ENCODE measurements at regions of chr6 and their contacts with region 1.

Region 1: DNA sequence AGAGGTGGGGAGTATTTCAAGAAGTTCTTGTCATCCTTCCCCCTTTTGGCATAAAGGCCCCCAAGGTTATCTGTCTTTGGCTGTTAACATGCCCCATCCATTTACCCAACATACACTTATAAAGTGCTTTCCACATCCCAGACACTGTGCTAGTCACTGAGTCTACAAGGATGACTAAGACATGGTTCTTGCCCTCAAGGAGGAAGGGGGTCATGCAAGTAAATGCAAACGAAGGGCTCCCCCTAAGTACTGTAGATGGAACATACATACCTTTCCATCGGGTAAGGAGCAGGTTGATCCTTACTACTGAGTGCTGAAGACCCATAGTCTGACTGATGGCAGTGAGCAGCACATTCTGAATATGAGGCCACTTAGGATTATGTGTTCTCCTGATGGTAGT is 38.3 kb downstream of the HECA start:
- DNase-seq: no peak
- H3K4me3 Mint-ChIP-seq: no peak overlapping the region
- H3K27ac Mint-ChIP-seq: peak overlapping the region; percentile 78
- H3K4me1 Mint-ChIP-seq: peaks cover 90% of the 10 kb centered on the region
- H3K27me3 Mint-ChIP-seq: no peaks in the 10 kb centered on the region

Region 2: DNA sequence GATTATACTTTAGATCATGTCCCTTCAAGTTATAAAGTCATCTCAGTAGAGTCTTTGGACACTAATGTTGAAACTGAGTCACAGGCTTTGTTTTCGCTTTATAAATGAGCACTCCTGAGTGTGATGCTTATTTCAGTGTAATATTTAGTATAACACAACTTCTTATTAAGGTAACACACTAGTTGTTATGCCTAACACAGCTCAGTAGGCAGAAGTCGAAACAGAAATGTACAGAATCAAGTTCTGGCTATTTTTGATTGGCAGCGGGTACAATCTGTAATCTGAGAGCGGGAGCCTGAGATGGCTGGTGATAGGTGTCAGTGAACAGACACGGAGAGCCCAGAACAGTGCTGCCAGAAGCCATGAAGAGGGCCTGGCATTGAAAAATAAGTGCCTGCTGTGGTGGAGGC is 26.9 kb before region 1 on chr6:
- CTCF ChIA-PET with region 1: interaction called, 4 read pairs
- POLR2A ChIA-PET with region 1: interaction called, 8 read pairs
- intact Hi-C with region 1: loop called (anchors 1 kb)
- DNase-seq: peak; percentile 59
- H3K4me3 Mint-ChIP-seq: peak overlapping the region; percentile 72
- H3K27ac Mint-ChIP-seq: peak overlapping the region; percentile 99
- H3K4me1 Mint-ChIP-seq: peaks cover 94% of the 10 kb centered on the region
- H3K27me3 Mint-ChIP-seq: no peaks in the 10 kb centered on the region

Region 3: DNA sequence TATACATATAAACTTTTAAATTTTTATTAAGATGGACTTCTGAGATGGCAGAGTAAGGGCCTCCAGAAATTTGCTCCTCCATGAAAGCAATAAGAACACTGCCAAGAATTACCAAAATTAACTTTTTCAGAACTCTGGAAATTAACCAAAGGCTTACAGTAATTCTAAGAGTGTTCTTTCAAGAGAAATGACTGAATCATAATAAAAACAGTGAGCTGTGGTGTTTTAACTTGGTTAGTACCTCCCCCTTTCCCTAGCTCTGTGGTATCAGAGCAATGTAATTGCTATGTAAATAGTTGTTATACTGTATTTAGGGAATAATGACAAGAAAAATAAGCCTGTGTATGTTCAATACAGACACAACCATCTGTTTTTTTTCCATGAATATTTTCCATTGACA is 19.3 kb before region 1 on chr6:
- CTCF ChIA-PET with region 1: no interaction called
- POLR2A ChIA-PET with region 1: interaction called, 3 read pairs
- intact Hi-C with region 1: loop called (anchors 2 kb)
- DNase-seq: no peak
- H3K4me3 Mint-ChIP-seq: peak overlapping the region; percentile 37
- H3K27ac Mint-ChIP-seq: peak overlapping the region; percentile 98
- H3K4me1 Mint-ChIP-seq: peaks cover 85% of the 10 kb centered on the region
- H3K27me3 Mint-ChIP-seq: no peaks in the 10 kb centered on the region

Region 4: DNA sequence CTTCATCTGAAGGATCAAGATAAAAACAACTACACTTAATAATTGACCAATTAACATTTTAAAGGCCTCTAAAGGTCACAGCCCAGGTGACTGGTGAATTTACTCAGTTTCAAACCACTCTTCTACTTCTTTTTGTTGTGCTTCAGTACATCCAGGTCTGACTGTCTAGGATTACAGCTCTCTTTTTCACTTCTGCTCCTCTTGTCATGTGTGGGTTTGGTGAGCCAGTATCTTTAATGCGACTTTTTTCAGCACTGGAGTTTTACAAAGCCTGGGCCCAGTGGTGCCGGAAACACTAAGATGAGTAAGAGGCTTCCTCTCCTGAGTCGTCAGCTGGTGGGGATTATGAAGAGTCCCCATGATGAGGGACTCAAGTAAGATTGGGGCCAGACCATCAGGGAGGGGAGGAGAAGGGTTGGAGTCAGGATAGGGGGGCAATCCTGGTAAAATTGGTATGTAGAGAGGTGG is 11.3 kb before region 1 on chr6:
- CTCF ChIA-PET with region 1: interaction called, 14 read pairs
- POLR2A ChIA-PET with region 1: interaction called, 3 read pairs
- intact Hi-C with region 1: loop called (anchors 1 kb)
- DNase-seq: peak; percentile 88
- H3K4me3 Mint-ChIP-seq: peak overlapping the region; percentile 61
- H3K27ac Mint-ChIP-seq: peak overlapping the region; percentile 96
- H3K4me1 Mint-ChIP-seq: peaks cover 92% of the 10 kb centered on the region
- H3K27me3 Mint-ChIP-seq: no peaks in the 10 kb centered on the region

Region 5: DNA sequence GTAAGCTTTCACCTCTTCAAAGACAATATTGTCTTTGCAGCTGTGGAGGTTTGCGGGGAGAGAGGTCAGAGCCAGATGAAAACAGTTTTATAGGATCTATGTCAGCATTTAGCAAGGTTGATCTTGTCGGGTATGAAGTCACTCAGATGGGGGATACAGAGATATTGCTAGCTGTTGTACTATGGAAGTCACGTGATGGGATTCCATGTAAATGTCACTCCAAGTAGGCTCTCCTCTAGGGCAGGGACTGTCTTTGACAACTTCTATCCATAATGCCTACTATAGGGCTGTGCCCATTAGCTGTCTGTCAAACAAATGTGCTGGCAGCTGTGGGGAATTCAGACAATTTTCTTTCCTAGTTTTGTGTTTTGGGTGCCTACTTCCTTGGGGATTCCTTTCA is 16.5 kb after region 1 on chr6:
- CTCF ChIA-PET with region 1: no interaction called
- POLR2A ChIA-PET with region 1: no interaction called
- intact Hi-C with region 1: no loop called
- DNase-seq: no peak
- H3K4me3 Mint-ChIP-seq: no peak overlapping the region
- H3K27ac Mint-ChIP-seq: no peak overlapping the region
- H3K4me1 Mint-ChIP-seq: peaks cover 30% of the 10 kb centered on the region
- H3K27me3 Mint-ChIP-seq: no peaks in the 10 kb centered on the region

Region 6: DNA sequence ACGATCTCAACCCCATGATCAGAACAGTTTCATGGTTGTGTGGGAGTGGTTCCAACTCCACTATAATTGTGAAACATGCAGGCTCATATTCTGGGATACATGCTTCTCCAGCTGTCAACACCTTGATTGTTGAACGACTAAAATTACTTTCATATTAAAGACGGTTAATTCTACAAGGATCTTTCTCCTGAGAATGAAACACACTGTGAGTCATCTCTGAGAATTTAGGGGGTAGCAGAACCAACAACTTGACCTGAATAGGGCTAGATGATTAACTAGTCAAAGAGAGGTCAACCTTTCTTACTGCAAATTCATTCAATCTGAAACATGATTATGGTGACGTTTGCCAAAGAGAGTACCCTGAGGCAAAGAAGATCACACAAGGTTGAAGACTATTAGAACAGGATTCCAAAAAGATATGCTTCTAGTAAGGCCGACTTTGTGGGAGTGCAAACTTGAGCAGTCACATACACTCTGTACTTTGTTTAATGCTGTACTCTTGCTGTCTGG is 376.4 kb after region 1 on chr6:
- CTCF ChIA-PET with region 1: no interaction called
- POLR2A ChIA-PET with region 1: no interaction called
- intact Hi-C with region 1: no loop called
- DNase-seq: no peak
- H3K4me3 Mint-ChIP-seq: no peak overlapping the region
- H3K27ac Mint-ChIP-seq: no peak overlapping the region
- H3K4me1 Mint-ChIP-seq: peaks cover 13% of the 10 kb centered on the region
- H3K27me3 Mint-ChIP-seq: no peaks in the 10 kb centered on the region

Measured in activated CD4-positive, alpha-beta memory T cell treated with anti-CD3 and anti-CD28 coated beads for 36 hours (primary cell).